HCT116 (cell line): ENCODE measurements at regions of chr1 and their contacts with region 1.

Region 1: GRCh38 chr1:182408435-182409075 is 8.1 kb upstream of the TEDDM1 start:
- DNase-seq: no peak
- ATAC-seq: no peak
- H3K4me3 ChIP-seq: no peak overlapping the region
- H3K27ac ChIP-seq: no peak overlapping the region
- H3K4me1 ChIP-seq: no peaks in the 10 kb centered on the region
- H3K27me3 ChIP-seq: no peaks in the 10 kb centered on the region
- CTCF ChIP-seq: no peak
- POLR2A ChIP-seq: no peak
- RAD21 ChIP-seq: no peak

Region 2: GRCh38 chr1:182303778-182304177 is 104.8 kb before region 1 on chr1:
- CTCF ChIA-PET with region 1: no interaction called
- POLR2A ChIA-PET with region 1: no interaction called
- RAD21 ChIA-PET with region 1: no interaction called
- intact Hi-C with region 1: no loop called
- DNase-seq: no peak
- ATAC-seq: no peak
- H3K4me3 ChIP-seq: no peak overlapping the region
- H3K27ac ChIP-seq: no peak overlapping the region
- H3K4me1 ChIP-seq: peaks cover 0 to 5% of the 10 kb centered on the region in 2 experiments; a peak in 1 of 4 replicates
- H3K27me3 ChIP-seq: no peaks in the 10 kb centered on the region
- CTCF ChIP-seq: no peak
- POLR2A ChIP-seq: no peak
- RAD21 ChIP-seq: no peak

Region 3: GRCh38 chr1:182391362-182392044 is 17.1 kb before region 1 on chr1 and contains the start of gene GLUL:
- CTCF ChIA-PET with region 1: interaction called, 6 read pairs
- POLR2A ChIA-PET with region 1: interaction called, 15 read pairs
- RAD21 ChIA-PET with region 1: no interaction called
- intact Hi-C with region 1: no loop called
- DNase-seq: peak; percentile 68
- ATAC-seq: peak; percentile 93
- H3K4me3 ChIP-seq: peak within 1 kb of the TSS; percentile 71 to 85
- H3K27ac ChIP-seq: peak within 1 kb of the TSS; percentile 94
- H3K4me1 ChIP-seq: peaks cover 13 to 18% of the 10 kb centered on the region in 2 experiments
- H3K27me3 ChIP-seq: no peaks in the 10 kb centered on the region
- CTCF ChIP-seq: no peak
- POLR2A ChIP-seq: peak; percentile 97
- RAD21 ChIP-seq: no peak; the same call in 1 of the 2 replicates
- total RNA-seq, gene GLUL: 165 TPM

Region 4: GRCh38 chr1:182861994-182862393 is 453.4 kb after region 1 on chr1:
- CTCF ChIA-PET with region 1: no interaction called
- POLR2A ChIA-PET with region 1: no interaction called
- RAD21 ChIA-PET with region 1: no interaction called
- intact Hi-C with region 1: no loop called
- DNase-seq: no peak
- ATAC-seq: no peak
- H3K4me3 ChIP-seq: no peak overlapping the region
- H3K27ac ChIP-seq: no peak overlapping the region
- H3K4me1 ChIP-seq: no peaks in the 10 kb centered on the region
- H3K27me3 ChIP-seq: no peaks in the 10 kb centered on the region
- CTCF ChIP-seq: no peak
- POLR2A ChIP-seq: no peak
- RAD21 ChIP-seq: no peak